Naive thymus-derived CD8-positive, alpha-beta T cell (primary cell): ENCODE measurements at regions of chr1 and their contacts with region 1.

Region 1: DNA sequence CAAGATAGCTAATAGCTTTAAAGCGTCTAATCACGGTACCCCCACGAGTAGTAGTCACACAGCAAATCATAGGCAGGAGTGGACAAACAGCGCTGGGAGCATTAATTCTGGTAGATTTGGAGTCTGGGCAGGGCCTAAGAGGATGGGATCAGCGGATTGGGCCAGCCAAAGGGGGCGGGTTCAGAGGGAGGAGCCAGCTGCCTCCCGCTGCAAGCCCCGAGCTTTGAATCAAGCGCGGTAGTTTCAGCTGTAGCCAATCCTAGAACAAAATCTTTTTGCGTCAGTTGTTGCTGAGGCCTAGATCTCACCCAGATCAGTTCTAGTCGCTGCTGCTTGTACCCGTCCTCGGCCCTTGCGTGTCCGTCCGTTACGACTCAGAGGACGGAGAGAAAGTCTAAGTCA is 576 bp upstream of the NASP start:
- DNase-seq: peak in 9 of 10 donors; percentile 88 to 96 (median 94)
- ATAC-seq: peak; percentile 71 to 72
- H3K4me3 Mint-ChIP-seq: peak overlapping the region; percentile 93 to 100 (median 99)
- H3K27ac Mint-ChIP-seq: peak overlapping the region; percentile 94 to 100 (median 99)
- H3K4me1 Mint-ChIP-seq: peaks cover 15 to 41% (median 36%) of the 10 kb centered on the region in 4 donors
- H3K27me3 Mint-ChIP-seq: no peaks in the 10 kb centered on the region

Region 2: GRCh38 chr1:45499415-45499769 is 83.9 kb before region 1 on chr1:
- POLR2A ChIA-PET with region 1: interaction called, 19 read pairs
- DNase-seq: no peak
- ATAC-seq: no peak
- H3K4me3 Mint-ChIP-seq: peak overlapping the region; percentile 89 to 98 (median 95)
- H3K27ac Mint-ChIP-seq: peak overlapping the region; percentile 72 to 97 (median 95)
- H3K4me1 Mint-ChIP-seq: peaks cover 26 to 40% (median 36%) of the 10 kb centered on the region in 4 donors
- H3K27me3 Mint-ChIP-seq: no peaks in the 10 kb centered on the region

Region 3: DNA sequence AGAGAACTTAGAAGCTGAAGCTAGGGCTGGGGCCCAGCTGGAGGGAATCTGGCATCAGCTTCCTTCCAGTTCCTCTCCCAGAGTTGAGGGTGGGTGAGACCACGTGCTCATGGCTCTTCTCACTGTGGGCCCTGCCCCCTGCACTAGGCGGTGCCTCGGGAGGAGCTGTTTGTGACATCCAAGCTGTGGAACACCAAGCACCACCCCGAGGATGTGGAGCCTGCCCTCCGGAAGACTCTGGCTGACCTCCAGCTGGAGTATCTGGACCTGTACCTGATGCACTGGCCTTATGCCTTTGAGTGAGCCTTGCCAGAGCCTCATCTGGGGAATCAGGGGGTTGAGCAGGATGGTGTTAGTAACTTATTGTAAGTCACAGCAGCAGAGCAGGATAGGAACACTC is 16.5 kb before region 1 on chr1:
- POLR2A ChIA-PET with region 1: no interaction called
- DNase-seq: no peak
- ATAC-seq: no peak
- H3K4me3 Mint-ChIP-seq: no peak overlapping the region
- H3K27ac Mint-ChIP-seq: no peak overlapping the region
- H3K4me1 Mint-ChIP-seq: no peaks in the 10 kb centered on the region
- H3K27me3 Mint-ChIP-seq: no peaks in the 10 kb centered on the region

Region 4: DNA sequence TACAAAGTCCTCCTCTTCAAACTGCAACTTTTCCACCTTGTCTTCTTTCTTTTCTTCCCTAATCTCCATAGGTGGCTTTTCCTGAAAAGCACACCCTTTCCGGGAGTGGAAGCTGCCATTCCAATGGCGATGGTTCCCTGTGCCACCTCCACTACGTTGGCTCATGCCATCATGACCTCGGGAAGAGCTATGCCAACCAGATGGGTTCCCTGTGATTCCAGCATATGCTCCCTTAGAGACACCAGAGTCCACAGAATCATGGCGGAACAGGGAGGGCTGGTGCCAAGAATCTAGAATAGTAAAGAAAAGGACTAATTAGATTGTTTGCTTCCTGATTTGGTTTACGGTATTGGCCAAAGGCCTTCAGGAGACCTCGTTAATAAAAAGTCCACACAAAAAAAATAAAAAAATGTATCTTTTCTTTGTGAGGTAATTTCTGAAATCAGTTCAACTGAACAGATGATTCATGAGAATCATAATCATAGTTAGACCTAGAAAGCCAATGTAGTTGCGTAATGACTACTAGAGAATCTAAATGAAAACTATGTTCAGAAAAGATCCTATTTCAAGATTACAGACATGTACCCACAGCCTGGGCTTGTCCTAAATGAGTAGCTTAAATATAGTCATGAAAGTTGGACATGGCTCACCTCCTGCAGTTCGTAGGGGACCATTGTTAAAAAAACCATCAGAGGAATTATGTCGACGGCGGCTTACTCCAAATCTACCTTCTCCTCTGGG is 71.4 kb after region 1 on chr1:
- POLR2A ChIA-PET with region 1: no interaction called
- DNase-seq: no peak
- ATAC-seq: no peak
- H3K4me3 Mint-ChIP-seq: no peak overlapping the region
- H3K27ac Mint-ChIP-seq: peak overlapping the region in 2 of 10 donors; percentile 11 to 33
- H3K4me1 Mint-ChIP-seq: peaks cover 0 to 11% (median 8%) of the 10 kb centered on the region in 4 donors
- H3K27me3 Mint-ChIP-seq: no peaks in the 10 kb centered on the region

Region 5: DNA sequence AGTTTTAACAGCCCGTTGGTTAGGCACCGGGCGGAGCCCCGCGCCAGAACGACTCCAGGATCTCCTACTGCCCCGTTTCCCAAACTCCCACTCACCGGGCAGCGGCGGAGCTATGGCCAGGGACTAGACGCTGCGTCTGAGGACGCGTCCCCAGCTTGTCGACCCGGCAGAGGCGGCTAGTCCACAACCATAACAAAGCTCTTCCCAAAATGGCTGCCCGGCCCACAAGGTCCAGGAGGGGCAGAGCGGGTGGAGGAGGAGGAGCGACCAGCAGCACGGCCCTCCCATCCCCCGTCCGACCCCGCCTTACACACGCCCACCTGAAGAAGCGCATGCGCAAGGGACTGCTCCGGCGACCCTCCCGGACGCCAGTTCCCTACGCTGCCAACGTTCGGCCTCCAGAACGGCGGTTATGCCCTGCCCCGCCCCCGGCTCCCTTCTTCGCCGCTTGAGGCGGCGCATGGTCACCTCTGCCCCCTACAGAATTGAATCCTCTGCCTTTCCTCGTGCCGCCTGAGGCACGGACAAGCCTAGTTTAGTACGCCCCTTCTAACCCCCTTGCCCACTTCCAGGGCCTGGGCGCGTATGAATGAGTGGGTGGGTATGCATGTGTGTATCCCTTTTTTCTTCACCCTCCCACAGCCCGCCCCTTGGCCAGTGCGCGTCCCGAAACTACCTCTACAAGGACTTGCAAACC is 103.2 kb after region 1 on chr1 and contains the start of gene GPBP1L1:
- POLR2A ChIA-PET with region 1: interaction called, 23 read pairs
- DNase-seq: peak; percentile 94 to 98 (median 98)
- ATAC-seq: peak; percentile 72
- H3K4me3 Mint-ChIP-seq: peak within 1 kb of the TSS; percentile 93 to 100 (median 99)
- H3K27ac Mint-ChIP-seq: peak within 1 kb of the TSS; percentile 99 to 100 (median 99)
- H3K4me1 Mint-ChIP-seq: peaks cover 19 to 66% (median 58%) of the 10 kb centered on the region in 4 donors
- H3K27me3 Mint-ChIP-seq: no peaks in the 10 kb centered on the region
- polyA plus RNA-seq, gene GPBP1L1: 88.9 to 94.0 (median 92.1) TPM